Activated T-helper 1 cell treated with anti-CD3 and anti-CD28 coated beads, Interleukin-12 subunit alpha, Interleukin-12 subunit beta, Interleukin-2, Interleukin-4 antibody, amounts not matched to agents 30 ng/mL and 10 ng/mL and 1 ng/mL, durations not matched to agents 14 hours and 24 hours and 36 hours (primary cell): ENCODE measurements at regions of chr21 and their contacts with region 1.

Region 1: DNA sequence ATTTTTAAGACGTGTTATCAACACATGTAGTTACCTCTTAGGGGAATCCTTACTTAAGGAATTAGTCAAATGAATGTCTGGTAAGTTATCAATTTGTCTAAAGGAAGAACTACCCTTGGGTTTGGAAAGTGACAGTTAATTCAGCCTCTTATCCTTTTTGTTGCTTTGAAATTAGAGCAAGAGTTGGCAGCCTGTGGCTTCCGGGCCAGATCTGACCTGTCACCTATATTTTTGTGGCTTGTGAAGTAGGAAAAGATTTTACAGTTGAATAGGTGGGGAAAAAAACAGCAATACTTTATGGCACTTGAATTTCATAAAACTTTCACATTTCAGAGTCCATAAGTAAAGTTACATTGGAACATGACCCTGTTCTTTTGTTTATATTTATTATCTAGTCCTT is 5.5 kb downstream of the MRPS6 start:
- DNase-seq: no peak
- H3K4me3 Mint-ChIP-seq: peak overlapping the region; percentile 61
- H3K27ac Mint-ChIP-seq: peak overlapping the region; percentile 70
- H3K4me1 Mint-ChIP-seq: peaks cover 96% of the 10 kb centered on the region
- H3K27me3 Mint-ChIP-seq: no peaks in the 10 kb centered on the region

Region 2: GRCh38 chr21:34091607-34092006 is 12.7 kb after region 1 on chr21:
- intact Hi-C with region 1: loop called (anchors 1 kb)
- DNase-seq: no peak
- H3K4me3 Mint-ChIP-seq: no peak overlapping the region
- H3K27ac Mint-ChIP-seq: no peak overlapping the region
- H3K4me1 Mint-ChIP-seq: peaks cover 39% of the 10 kb centered on the region
- H3K27me3 Mint-ChIP-seq: no peaks in the 10 kb centered on the region

Region 3: DNA sequence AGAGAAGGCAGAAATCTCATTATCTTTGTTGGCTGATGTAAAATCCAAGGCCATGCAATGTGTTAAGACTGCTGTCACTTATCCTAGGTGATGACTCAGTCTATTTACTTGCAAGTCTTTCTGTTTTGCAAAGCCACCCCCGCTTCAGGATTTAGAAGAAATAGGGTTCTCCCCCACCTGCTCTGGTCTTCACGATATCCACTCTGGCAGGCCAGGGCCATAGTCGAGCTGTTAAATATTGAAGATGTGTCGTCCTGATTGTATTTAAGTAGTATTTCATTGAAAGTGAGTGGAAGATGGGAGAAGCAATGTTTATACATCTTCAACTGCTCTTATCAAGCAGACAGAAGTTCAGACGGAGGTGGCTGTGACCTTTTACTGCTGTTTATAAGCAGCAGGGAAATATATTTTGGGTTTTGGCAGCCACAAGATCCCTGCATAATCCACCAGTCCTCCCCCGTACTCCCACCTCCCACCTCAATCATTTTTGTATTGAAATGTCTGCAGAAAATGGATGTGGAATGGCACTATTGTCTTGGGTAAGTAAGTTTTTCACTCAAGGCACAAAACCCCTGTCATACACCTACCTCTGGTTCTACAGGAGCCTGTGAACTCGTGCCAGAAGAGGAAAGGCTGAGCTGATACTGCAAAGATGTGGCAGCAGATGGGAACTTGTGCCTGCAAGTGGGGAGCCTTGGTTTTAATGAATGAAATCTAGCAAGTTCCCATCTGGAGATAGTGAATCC is 111.8 kb after region 1 on chr21:
- intact Hi-C with region 1: loop called (anchors 2 kb)
- DNase-seq: no peak
- H3K4me3 Mint-ChIP-seq: peak overlapping the region; percentile 66
- H3K27ac Mint-ChIP-seq: peak overlapping the region; percentile 92
- H3K4me1 Mint-ChIP-seq: peaks cover 53% of the 10 kb centered on the region
- H3K27me3 Mint-ChIP-seq: no peaks in the 10 kb centered on the region